ENCODE measurements at regions of chr3 and their contacts with region 1.

Region 1: GRCh38 chr3:132180337-132180791 is 136.8 kb upstream of the ACP3 start:
- DNase-seq: peak; percentile 74
- H3K4me3 Mint-ChIP-seq: no peak overlapping the region
- H3K27ac Mint-ChIP-seq: peak overlapping the region; percentile 85
- H3K4me1 Mint-ChIP-seq: peaks cover 23% of the 10 kb centered on the region
- H3K27me3 Mint-ChIP-seq: no peaks in the 10 kb centered on the region
- CTCF ChIP-seq: peak; percentile 89

Region 2: GRCh38 chr3:131543714-131544113 is 636.6 kb before region 1 on chr3:
- CTCF ChIA-PET with region 1: no interaction called
- intact Hi-C with region 1: loop called (anchors 10 kb)
- DNase-seq: peak; percentile 28
- H3K4me3 Mint-ChIP-seq: no peak overlapping the region
- H3K27ac Mint-ChIP-seq: no peak overlapping the region
- H3K4me1 Mint-ChIP-seq: peaks cover 14% of the 10 kb centered on the region
- H3K27me3 Mint-ChIP-seq: no peaks in the 10 kb centered on the region
- CTCF ChIP-seq: no peak

Region 3: GRCh38 chr3:131892331-131892730 is 288.0 kb before region 1 on chr3:
- CTCF ChIA-PET with region 1: no interaction called
- intact Hi-C with region 1: loop called (anchors 5 kb)
- DNase-seq: no peak
- H3K4me3 Mint-ChIP-seq: no peak overlapping the region
- H3K27ac Mint-ChIP-seq: no peak overlapping the region
- H3K4me1 Mint-ChIP-seq: no peaks in the 10 kb centered on the region
- H3K27me3 Mint-ChIP-seq: no peaks in the 10 kb centered on the region
- CTCF ChIP-seq: peak; percentile 25

Region 4: DNA sequence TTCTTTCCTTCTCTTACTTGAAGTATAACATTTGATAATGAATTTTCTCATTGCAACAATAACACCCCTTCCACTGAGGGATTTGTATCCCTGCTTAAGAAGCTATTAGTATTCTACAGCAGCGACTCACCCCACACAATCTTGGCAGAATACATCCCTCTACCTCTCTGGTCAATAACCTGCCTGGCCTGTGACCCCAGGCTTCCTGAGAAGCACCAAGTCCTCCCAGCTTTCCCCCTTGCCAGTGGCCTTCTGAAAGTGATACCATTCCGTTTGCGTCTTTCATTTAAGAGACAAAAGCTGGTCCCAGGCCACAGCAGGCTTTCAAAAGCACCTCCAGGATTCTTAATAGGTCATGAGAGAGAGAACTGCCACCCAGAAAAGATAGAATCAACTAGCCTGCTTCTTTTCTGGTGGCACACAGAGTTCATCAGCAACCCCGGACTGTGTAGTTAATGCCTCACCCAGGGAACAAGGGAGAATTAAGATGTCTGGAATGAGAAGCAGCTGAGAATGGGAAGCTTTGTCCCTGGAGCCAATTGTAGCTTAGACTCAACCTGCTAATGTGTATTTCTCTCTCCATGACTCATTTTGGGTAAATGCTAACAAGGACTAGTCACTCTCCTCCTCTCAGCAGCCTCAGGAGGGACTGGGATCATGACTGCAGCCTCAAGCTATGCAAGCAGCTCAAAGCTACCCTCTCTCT is 44.6 kb before region 1 on chr3:
- CTCF ChIA-PET with region 1: interaction called, 3 read pairs
- intact Hi-C with region 1: loop called (anchors 1 kb)
- DNase-seq: peak; percentile 80
- H3K4me3 Mint-ChIP-seq: peak overlapping the region; percentile 74
- H3K27ac Mint-ChIP-seq: peak overlapping the region; percentile 99
- H3K4me1 Mint-ChIP-seq: peaks cover 53% of the 10 kb centered on the region
- H3K27me3 Mint-ChIP-seq: no peaks in the 10 kb centered on the region
- CTCF ChIP-seq: no peak

Region 5: DNA sequence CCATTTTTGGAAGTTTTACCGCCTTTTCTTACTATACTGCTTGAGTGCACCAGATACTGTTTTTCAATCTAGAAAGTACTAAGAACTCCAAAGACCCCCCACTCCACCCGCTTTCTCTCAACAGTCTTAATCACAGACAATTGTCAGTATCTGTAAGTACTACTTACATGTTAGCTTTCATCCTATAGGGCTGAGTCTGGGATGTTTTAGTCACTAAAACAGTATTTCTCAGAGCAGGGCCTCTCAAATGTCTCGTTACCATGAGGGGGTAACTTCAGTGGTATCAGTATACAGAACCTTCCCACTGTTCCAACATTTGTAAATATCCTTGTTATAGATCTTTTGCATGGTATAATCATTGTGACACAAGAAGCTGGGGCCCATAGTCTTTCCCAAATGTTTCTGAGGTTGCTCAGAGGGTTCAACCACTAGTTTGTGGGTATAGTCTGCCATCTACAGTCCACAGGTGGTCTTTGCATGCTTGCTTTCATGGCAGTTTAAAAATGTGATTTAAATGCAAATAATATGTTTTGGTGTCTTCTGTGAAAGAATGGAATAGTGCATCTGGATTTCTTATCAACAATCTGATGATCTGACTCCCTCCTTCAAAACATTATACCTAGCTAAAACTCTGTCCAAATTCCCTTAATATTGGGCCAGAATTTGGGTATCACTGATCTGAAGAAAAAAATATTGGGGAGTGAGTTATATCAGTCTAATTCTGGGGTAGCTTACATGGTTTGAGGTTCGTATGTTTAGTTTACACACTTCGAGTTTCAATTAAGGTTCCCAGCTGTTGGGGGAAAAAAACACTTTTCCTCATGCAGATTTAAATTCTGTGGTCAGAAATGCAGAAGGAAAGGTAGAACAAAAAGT is 218.9 kb after region 1 on chr3:
- CTCF ChIA-PET with region 1: no interaction called
- intact Hi-C with region 1: loop called (anchors 2 kb)
- DNase-seq: peak; percentile 63
- H3K4me3 Mint-ChIP-seq: no peak overlapping the region
- H3K27ac Mint-ChIP-seq: no peak overlapping the region
- H3K4me1 Mint-ChIP-seq: no peaks in the 10 kb centered on the region
- H3K27me3 Mint-ChIP-seq: no peaks in the 10 kb centered on the region
- CTCF ChIP-seq: peak; percentile 87